ENCODE measurements at regions of chr15 and their contacts with region 1.

Region 1: DNA sequence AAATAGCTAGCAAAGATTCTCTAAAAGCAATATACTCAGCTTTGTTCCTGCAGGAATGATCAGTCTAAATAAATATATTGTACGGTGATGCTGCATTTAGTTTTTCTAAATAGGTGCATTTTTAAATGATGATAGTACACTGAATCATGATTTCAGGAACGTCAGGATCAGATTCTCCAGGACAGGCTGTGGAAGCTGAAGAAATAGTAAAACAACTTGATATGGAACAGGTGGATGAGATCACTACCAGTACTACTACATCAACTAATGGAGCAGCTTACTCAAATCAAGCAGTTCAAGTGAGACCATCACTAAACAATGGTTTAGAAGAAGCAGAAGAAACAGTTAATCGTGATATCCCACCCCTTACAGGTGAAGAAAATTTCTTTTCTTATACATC is 46.3 kb upstream of the EIF3J start:
- DNase-seq: peak; percentile 87
- ATAC-seq: peak; percentile 67
- H3K4me3 ChIP-seq: no peak overlapping the region
- H3K27ac ChIP-seq: no peak overlapping the region
- H3K4me1 ChIP-seq: peaks cover 6% of the 10 kb centered on the region
- H3K27me3 ChIP-seq: no peaks in the 10 kb centered on the region
- CTCF ChIP-seq: no peak
- POLR2A ChIP-seq: no peak
- RAD21 ChIP-seq: no peak

Region 2: DNA sequence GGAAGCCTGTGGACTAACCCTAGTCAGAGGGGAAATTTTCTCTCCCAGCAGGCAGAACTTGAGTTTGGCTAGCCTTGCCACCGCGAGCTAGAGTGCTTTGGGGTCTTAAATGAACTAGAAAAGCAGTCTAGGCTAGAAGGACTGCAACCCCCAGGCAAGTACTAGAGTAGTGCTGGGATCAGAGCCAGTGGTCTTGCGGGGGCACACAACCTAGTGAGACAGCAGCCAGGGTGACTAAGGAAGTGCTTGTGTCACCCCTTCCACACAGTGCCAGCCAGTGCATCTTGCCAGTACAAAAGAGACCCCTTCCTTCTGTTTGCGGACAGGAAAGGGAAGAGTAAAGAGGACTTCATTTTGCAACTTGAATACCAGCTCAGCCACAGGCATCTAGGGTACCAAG is 143.1 kb before region 1 on chr15:
- CTCF ChIA-PET with region 1: no interaction called
- POLR2A ChIA-PET with region 1: no interaction called
- dilution Hi-C with region 1: no loop called
- in situ Hi-C with region 1: no loop called
- intact Hi-C with region 1: loop called (anchors 10 kb)
- DNase-seq: no peak
- ATAC-seq: no peak
- H3K4me3 ChIP-seq: no peak overlapping the region
- H3K27ac ChIP-seq: no peak overlapping the region
- H3K4me1 ChIP-seq: no peaks in the 10 kb centered on the region
- H3K27me3 ChIP-seq: no peaks in the 10 kb centered on the region
- CTCF ChIP-seq: no peak
- POLR2A ChIP-seq: no peak
- RAD21 ChIP-seq: no peak